Caco-2 (cell line): ENCODE measurements at regions of chr2 and their contacts with region 1.

Region 1: GRCh38 chr2:108315444-108315934 is 26.8 kb downstream of the SULT1C2 start:
- DNase-seq: peak; percentile 79 to 88
- H3K4me3 ChIP-seq: peak overlapping the region; percentile 22
- H3K4me3 Mint-ChIP-seq: peak overlapping the region; percentile 68
- H3K27ac Mint-ChIP-seq: peak overlapping the region; percentile 90
- H3K4me1 ChIP-seq: peaks cover 39% of the 10 kb centered on the region
- H3K4me1 Mint-ChIP-seq: peaks cover 41% of the 10 kb centered on the region
- H3K27me3 ChIP-seq: no peaks in the 10 kb centered on the region; the same call in 1 of the 2 replicates
- H3K27me3 Mint-ChIP-seq: no peaks in the 10 kb centered on the region
- CTCF ChIP-seq: no peak

Region 2: GRCh38 chr2:108215794-108216211 is 99.7 kb before region 1 on chr2:
- CTCF ChIA-PET with region 1: no interaction called
- POLR2A ChIA-PET with region 1: no interaction called
- intact Hi-C with region 1: loop called (anchors 5 kb)
- DNase-seq: peak; percentile 46 to 48
- H3K4me3 ChIP-seq: no peak overlapping the region
- H3K4me3 Mint-ChIP-seq: no peak overlapping the region
- H3K27ac Mint-ChIP-seq: no peak overlapping the region
- H3K4me1 ChIP-seq: peaks cover 5% of the 10 kb centered on the region; the same call in 1 of the 2 replicates
- H3K4me1 Mint-ChIP-seq: no peaks in the 10 kb centered on the region
- H3K27me3 ChIP-seq: no peaks in the 10 kb centered on the region
- H3K27me3 Mint-ChIP-seq: no peaks in the 10 kb centered on the region
- CTCF ChIP-seq: peak; percentile 23 to 49

Region 3: GRCh38 chr2:108267101-108267500 is 48.4 kb before region 1 on chr2:
- CTCF ChIA-PET with region 1: no interaction called
- POLR2A ChIA-PET with region 1: no interaction called
- intact Hi-C with region 1: loop called (anchors 2 kb)
- DNase-seq: no peak
- H3K4me3 ChIP-seq: no peak overlapping the region
- H3K4me3 Mint-ChIP-seq: no peak overlapping the region
- H3K27ac Mint-ChIP-seq: no peak overlapping the region
- H3K4me1 ChIP-seq: peaks cover 15% of the 10 kb centered on the region
- H3K4me1 Mint-ChIP-seq: peaks cover 40% of the 10 kb centered on the region
- H3K27me3 ChIP-seq: no peaks in the 10 kb centered on the region
- H3K27me3 Mint-ChIP-seq: no peaks in the 10 kb centered on the region
- CTCF ChIP-seq: no peak

Region 4: DNA sequence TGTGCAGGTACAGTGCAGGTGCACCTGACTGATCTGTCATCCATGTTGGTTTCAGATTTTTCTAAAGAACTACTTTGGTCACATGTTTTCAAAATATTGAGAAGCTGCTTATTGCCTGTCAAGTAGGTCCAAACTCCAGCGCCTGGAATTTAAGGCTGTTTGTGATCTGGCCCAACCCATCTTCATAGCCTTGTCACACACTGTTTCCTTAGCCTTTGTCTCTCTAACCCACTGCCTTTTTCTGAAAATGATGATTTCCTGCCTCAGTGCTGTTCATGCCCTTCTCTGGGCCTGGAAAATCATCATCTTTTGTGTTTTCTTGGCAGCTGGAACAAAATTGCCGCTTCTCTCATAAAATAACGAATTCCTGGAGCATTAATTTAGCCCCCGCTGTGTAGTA is 226.0 kb after region 1 on chr2:
- CTCF ChIA-PET with region 1: no interaction called
- POLR2A ChIA-PET with region 1: no interaction called
- intact Hi-C with region 1: loop called (anchors 1 kb)
- DNase-seq: peak; percentile 69 to 79
- H3K4me3 ChIP-seq: no peak overlapping the region
- H3K4me3 Mint-ChIP-seq: peak overlapping the region; percentile 49
- H3K27ac Mint-ChIP-seq: peak overlapping the region; percentile 71
- H3K4me1 ChIP-seq: peaks cover 39% of the 10 kb centered on the region
- H3K4me1 Mint-ChIP-seq: peaks cover 48% of the 10 kb centered on the region
- H3K27me3 ChIP-seq: no peaks in the 10 kb centered on the region
- H3K27me3 Mint-ChIP-seq: no peaks in the 10 kb centered on the region
- CTCF ChIP-seq: no peak